CD4-positive, alpha-beta T cell (primary cell): ENCODE measurements at regions of chr12 and their contacts with region 1.

Region 1: GRCh38 chr12:107105410-107105703 is 12.0 kb upstream of the CRY1 start:
- DNase-seq: no peak
- ATAC-seq: no peak
- H3K4me3 ChIP-seq: no peak overlapping the region
- H3K4me3 Mint-ChIP-seq: no peak overlapping the region
- H3K27ac ChIP-seq: no peak overlapping the region
- H3K27ac Mint-ChIP-seq: no peak overlapping the region
- H3K4me1 ChIP-seq: peaks cover 3% of the 10 kb centered on the region
- H3K4me1 Mint-ChIP-seq: no peaks in the 10 kb centered on the region
- H3K27me3 ChIP-seq: no peaks in the 10 kb centered on the region
- H3K27me3 Mint-ChIP-seq: peaks cover 6% of the 10 kb centered on the region
- CTCF ChIP-seq: no peak

Region 2: DNA sequence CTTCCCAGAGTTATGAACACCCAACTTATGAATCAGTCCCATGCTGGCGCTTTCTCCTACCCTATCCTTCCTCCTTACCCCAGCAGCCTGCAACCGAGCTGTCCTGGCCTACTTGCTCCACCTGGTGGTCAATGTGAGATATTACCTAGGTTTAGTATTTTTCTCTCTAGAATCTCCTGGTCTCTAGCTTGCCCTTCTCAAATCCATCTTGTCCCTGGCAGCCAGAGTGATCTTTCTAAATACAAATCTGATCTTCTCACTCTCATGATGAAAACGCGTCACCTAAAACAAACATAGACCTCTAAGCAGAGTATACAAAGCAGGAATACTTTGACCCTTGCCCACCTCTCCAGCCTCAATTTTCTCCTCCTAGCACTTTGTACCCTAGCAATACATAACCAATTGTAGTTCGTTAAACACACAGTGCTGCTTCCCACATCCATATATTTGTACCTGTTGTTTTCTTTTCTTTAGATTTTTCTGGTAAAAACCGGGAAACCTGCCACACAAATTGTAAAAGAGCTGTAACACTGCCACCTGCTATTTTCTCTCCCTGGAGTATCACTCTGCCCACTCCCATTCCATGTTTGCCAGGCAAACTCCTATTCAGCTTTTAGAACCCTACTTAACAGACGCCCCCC is 822.8 kb before region 1 on chr12:
- CTCF ChIA-PET with region 1: no interaction called
- POLR2A ChIA-PET with region 1: no interaction called
- intact Hi-C with region 1: no loop called
- DNase-seq: peak; percentile 20 to 81 (median 37)
- ATAC-seq: peak; percentile 96
- H3K4me3 ChIP-seq: no peak overlapping the region
- H3K4me3 Mint-ChIP-seq: no peak overlapping the region
- H3K27ac ChIP-seq: no peak overlapping the region
- H3K27ac Mint-ChIP-seq: no peak overlapping the region
- H3K4me1 ChIP-seq: no peaks in the 10 kb centered on the region
- H3K4me1 Mint-ChIP-seq: no peaks in the 10 kb centered on the region
- H3K27me3 ChIP-seq: no peaks in the 10 kb centered on the region
- H3K27me3 Mint-ChIP-seq: peaks cover 10% of the 10 kb centered on the region
- CTCF ChIP-seq: peak; percentile 73

Region 3: GRCh38 chr12:106386813-106387535 is 718.4 kb before region 1 on chr12:
- CTCF ChIA-PET with region 1: no interaction called
- POLR2A ChIA-PET with region 1: no interaction called
- intact Hi-C with region 1: loop called (anchors 1 to 2 kb)
- DNase-seq: no peak
- ATAC-seq: no peak
- H3K4me3 ChIP-seq: no peak overlapping the region
- H3K4me3 Mint-ChIP-seq: no peak overlapping the region
- H3K27ac ChIP-seq: no peak overlapping the region
- H3K27ac Mint-ChIP-seq: no peak overlapping the region
- H3K4me1 ChIP-seq: peaks cover 3% of the 10 kb centered on the region
- H3K4me1 Mint-ChIP-seq: no peaks in the 10 kb centered on the region
- H3K27me3 ChIP-seq: no peaks in the 10 kb centered on the region
- H3K27me3 Mint-ChIP-seq: no peaks in the 10 kb centered on the region
- CTCF ChIP-seq: no peak

Region 4: GRCh38 chr12:107145397-107145796 is 40.0 kb after region 1 on chr12:
- CTCF ChIA-PET with region 1: no interaction called
- POLR2A ChIA-PET with region 1: no interaction called
- intact Hi-C with region 1: no loop called
- DNase-seq: no peak
- ATAC-seq: no peak
- H3K4me3 ChIP-seq: no peak overlapping the region
- H3K4me3 Mint-ChIP-seq: no peak overlapping the region
- H3K27ac ChIP-seq: no peak overlapping the region
- H3K27ac Mint-ChIP-seq: no peak overlapping the region
- H3K4me1 ChIP-seq: no peaks in the 10 kb centered on the region
- H3K4me1 Mint-ChIP-seq: no peaks in the 10 kb centered on the region
- H3K27me3 ChIP-seq: no peaks in the 10 kb centered on the region
- H3K27me3 Mint-ChIP-seq: no peaks in the 10 kb centered on the region
- CTCF ChIP-seq: no peak

Region 5: GRCh38 chr12:108967869-108968540 is 1862.6 kb after region 1 on chr12:
- CTCF ChIA-PET with region 1: no interaction called
- POLR2A ChIA-PET with region 1: no interaction called
- intact Hi-C with region 1: no loop called
- DNase-seq: no peak
- ATAC-seq: no peak
- H3K4me3 ChIP-seq: no peak overlapping the region
- H3K4me3 Mint-ChIP-seq: no peak overlapping the region
- H3K27ac ChIP-seq: no peak overlapping the region
- H3K27ac Mint-ChIP-seq: no peak overlapping the region
- H3K4me1 ChIP-seq: no peaks in the 10 kb centered on the region
- H3K4me1 Mint-ChIP-seq: no peaks in the 10 kb centered on the region
- H3K27me3 ChIP-seq: peaks cover 0 to 7% of the 10 kb centered on the region in 2 experiments
- H3K27me3 Mint-ChIP-seq: peaks cover 12% of the 10 kb centered on the region
- CTCF ChIP-seq: peak; percentile 31